ENCODE measurements at regions of chr3 and their contacts with region 1.

Region 1: DNA sequence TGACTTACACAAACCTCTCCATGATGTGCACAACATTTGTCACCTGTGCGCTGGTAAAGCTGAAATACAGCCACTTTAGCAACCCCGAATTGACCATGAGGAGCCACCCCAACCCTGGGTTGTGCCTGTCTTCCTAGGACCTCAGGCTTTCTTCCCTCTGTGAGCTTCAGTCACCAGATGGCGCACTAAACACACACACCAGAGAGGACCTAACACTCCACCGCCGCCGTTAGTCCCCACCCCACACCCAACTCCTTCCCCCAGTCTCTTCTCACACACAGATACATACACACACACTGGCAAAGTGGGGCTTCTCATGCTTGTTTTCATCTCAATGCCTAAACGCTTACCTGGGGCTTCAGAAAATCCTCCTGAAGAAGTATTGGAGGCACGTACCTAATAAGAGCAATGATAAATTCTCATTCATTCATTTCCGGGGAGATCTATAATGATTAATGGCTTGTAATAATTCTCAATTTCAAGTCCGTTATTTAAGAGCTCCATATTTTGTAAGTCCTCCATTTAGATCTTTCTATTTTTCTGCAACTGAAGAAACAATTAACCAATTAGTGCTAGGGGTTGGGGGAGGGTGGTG is 2.1 kb upstream of the CCDC80 start:
- DNase-seq: peak; percentile 98
- H3K4me3 ChIP-seq: peak overlapping the region; percentile 27 to 46 (median 30)
- H3K27ac ChIP-seq: peak overlapping the region in 2 of 4 donors; percentile 55 to 83
- H3K4me1 ChIP-seq: peaks cover 13 to 79% (median 73%) of the 10 kb centered on the region in 4 donors
- H3K27me3 ChIP-seq: no peaks in the 10 kb centered on the region
- CTCF ChIP-seq: peak; percentile 85 to 87 (median 86)
- EP300 ChIP-seq: no peak
- POLR2A ChIP-seq: no peak

Region 2: DNA sequence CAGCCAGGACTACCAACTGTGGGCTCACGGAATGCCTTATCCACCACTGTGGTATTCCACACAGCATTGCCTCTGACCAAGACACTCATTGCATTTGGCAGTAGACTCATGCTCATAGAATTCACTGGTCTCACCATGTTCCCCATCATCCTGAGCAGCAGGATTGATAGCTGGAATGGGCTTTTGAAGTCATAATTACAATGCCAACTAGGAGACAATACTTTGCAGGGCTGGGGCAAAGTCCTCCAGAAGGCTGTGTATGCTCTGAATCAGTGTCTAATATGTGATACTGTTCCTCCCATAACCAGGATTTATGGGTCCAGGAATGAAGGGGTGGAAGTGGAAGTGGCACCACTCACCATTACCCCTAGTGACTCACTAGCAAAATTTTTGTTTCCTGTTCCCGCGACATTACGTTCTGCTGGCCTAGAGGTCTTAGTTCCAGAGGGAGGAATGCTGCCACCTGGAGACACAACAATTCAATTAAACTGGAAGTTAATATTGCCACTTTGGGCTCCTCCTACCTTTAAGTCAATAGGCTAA is 56.5 kb after region 1 on chr3:
- intact Hi-C with region 1: loop called (anchors 10 kb)
- DNase-seq: no peak
- H3K4me3 ChIP-seq: no peak overlapping the region
- H3K27ac ChIP-seq: no peak overlapping the region
- H3K4me1 ChIP-seq: peaks cover 0 to 11% (median 3%) of the 10 kb centered on the region in 4 donors
- H3K27me3 ChIP-seq: no peaks in the 10 kb centered on the region
- CTCF ChIP-seq: no peak
- EP300 ChIP-seq: no peak
- POLR2A ChIP-seq: no peak

Region 3: GRCh38 chr3:112734718-112735350 is 91.8 kb after region 1 on chr3:
- intact Hi-C with region 1: loop called (anchors 2 kb)
- DNase-seq: no peak
- H3K4me3 ChIP-seq: no peak overlapping the region
- H3K27ac ChIP-seq: no peak overlapping the region
- H3K4me1 ChIP-seq: peaks cover 0 to 4% (median 0%) of the 10 kb centered on the region in 4 donors
- H3K27me3 ChIP-seq: no peaks in the 10 kb centered on the region
- CTCF ChIP-seq: peak; percentile 51 to 67 (median 53)
- EP300 ChIP-seq: no peak
- POLR2A ChIP-seq: no peak

Region 4: GRCh38 chr3:112814266-112814665 is 171.3 kb after region 1 on chr3:
- intact Hi-C with region 1: loop called (anchors 1 kb)
- DNase-seq: no peak
- H3K4me3 ChIP-seq: no peak overlapping the region
- H3K27ac ChIP-seq: peak overlapping the region in 2 of 4 donors; percentile 66 to 74
- H3K4me1 ChIP-seq: peaks cover 0 to 39% (median 35%) of the 10 kb centered on the region in 4 donors
- H3K27me3 ChIP-seq: no peaks in the 10 kb centered on the region
- CTCF ChIP-seq: peak; percentile 45 to 53 (median 46)
- EP300 ChIP-seq: no peak
- POLR2A ChIP-seq: no peak

Region 5: DNA sequence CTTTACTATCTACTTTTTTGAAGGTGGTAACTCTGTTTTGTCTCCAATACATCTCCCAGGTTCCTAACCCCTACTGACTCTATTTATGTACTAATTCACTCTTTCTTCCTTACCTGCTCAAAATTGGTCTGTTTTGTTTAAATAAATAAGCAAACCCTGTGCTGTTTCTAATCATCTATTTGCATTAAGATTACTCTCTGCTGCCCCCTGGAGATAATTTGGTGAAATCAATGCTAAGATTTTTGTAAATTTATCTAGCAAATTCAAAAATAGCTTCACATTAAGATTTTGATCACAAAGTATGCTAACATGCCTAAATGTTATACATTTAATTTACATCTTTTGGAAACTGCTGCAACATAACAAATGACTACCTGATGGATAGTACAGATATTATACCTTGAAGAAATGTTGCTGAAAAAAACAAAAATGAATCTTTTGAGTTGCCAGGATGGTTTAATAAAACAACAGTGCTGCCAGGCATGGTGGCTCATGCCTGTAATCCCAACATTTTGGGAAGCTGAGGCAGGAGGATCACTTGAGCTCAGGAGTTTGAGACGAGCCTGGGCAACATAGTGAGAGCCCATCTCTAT is 336.3 kb after region 1 on chr3:
- intact Hi-C with region 1: loop called (anchors 2 kb)
- DNase-seq: no peak
- H3K4me3 ChIP-seq: no peak overlapping the region
- H3K27ac ChIP-seq: no peak overlapping the region
- H3K4me1 ChIP-seq: peaks cover 0 to under 1% (median 0%) of the 10 kb centered on the region in 4 donors
- H3K27me3 ChIP-seq: no peaks in the 10 kb centered on the region
- CTCF ChIP-seq: peak; percentile 71 to 75 (median 73)
- EP300 ChIP-seq: no peak
- POLR2A ChIP-seq: no peak

Measured in esophagus muscularis mucosa (tissue), 4 donors.